ENCODE measurements at regions of chr18 and their contacts with region 1.

Region 1: GRCh38 chr18:49250816-49251388 is 209.5 kb downstream of the DYM start:
- DNase-seq: no peak
- ATAC-seq: peak in 3 of 4 donors; percentile 38 to 44 (median 42)
- H3K4me3 ChIP-seq: no peak overlapping the region
- H3K27ac ChIP-seq: no peak overlapping the region
- H3K4me1 ChIP-seq: peaks cover 0 to 26% (median 0%) of the 10 kb centered on the region in 12 donors
- H3K27me3 ChIP-seq: no peaks in the 10 kb centered on the region
- CTCF ChIP-seq: peak in 11 of 12 donors; percentile 14 to 58 (median 41)
- POLR2A ChIP-seq: no peak

Region 2: DNA sequence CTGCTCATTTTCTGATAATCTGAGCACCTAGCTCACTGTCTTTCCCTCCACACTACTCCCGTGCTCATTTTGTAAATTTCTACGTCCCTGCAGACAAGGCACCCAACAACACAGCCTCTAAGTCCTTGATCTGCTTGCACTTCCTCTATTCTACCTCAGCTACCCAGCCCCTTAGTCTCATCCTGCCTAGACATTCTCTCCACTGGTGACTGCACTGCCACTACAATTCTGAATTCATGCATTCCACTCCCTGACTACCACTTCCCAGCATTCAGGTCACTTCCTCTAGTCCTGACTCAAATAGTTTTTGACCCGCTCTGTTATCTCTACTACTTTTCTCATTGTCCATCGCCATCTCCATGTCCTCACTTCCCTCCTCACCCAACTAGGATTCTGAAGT is 53.8 kb after region 1 on chr18:
- intact Hi-C with region 1: no loop called
- DNase-seq: no peak
- ATAC-seq: no peak
- H3K4me3 ChIP-seq: no peak overlapping the region
- H3K27ac ChIP-seq: no peak overlapping the region
- H3K4me1 ChIP-seq: no peaks in the 10 kb centered on the region
- H3K27me3 ChIP-seq: no peaks in the 10 kb centered on the region
- CTCF ChIP-seq: no peak
- POLR2A ChIP-seq: no peak

Region 3: GRCh38 chr18:49447810-49448745 is 197.2 kb after region 1 on chr18:
- intact Hi-C with region 1: loop called in 2 of 10 experiments (anchors 10 kb)
- DNase-seq: peak in 1 of 5 donors; percentile 20
- ATAC-seq: peak in 3 of 4 donors; percentile 78 to 87 (median 82)
- H3K4me3 ChIP-seq: no peak overlapping the region
- H3K27ac ChIP-seq: no peak overlapping the region
- H3K4me1 ChIP-seq: peaks cover 0 to 4% (median 0%) of the 10 kb centered on the region in 12 donors
- H3K27me3 ChIP-seq: no peaks in the 10 kb centered on the region
- CTCF ChIP-seq: peak; percentile 30 to 65 (median 52)
- POLR2A ChIP-seq: no peak

Measured in heart left ventricle (tissue), 16 donors.